CD4-positive, alpha-beta memory T cell (primary cell): ENCODE measurements at regions of chr11 and their contacts with region 1.

Region 1: GRCh38 chr11:65117216-65118096 is at the start of gene ZNHIT2:
- DNase-seq: peak; percentile 100
- H3K4me3 ChIP-seq: peak within 1 kb of the TSS; percentile 69 to 82
- H3K4me3 Mint-ChIP-seq: peak within 1 kb of the TSS; percentile 88 to 94 (median 92)
- H3K27ac ChIP-seq: peak within 1 kb of the TSS; percentile 91
- H3K27ac Mint-ChIP-seq: peak within 1 kb of the TSS; percentile 95 to 99 (median 97)
- H3K4me1 ChIP-seq: peaks cover 40% of the 10 kb centered on the region
- H3K4me1 Mint-ChIP-seq: peaks cover 17 to 69% (median 42%) of the 10 kb centered on the region in 4 donors
- H3K27me3 ChIP-seq: no peaks in the 10 kb centered on the region
- H3K27me3 Mint-ChIP-seq: no peaks in the 10 kb centered on the region
- total RNA-seq, gene ZNHIT2: 15.9 to 16.5 TPM

Region 2: GRCh38 chr11:64778508-64779346 is 338.7 kb before region 1 on chr11 and contains the start of gene SF1:
- CTCF ChIA-PET with region 1: interaction called, 3 read pairs
- POLR2A ChIA-PET with region 1: interaction called, 21 read pairs
- intact Hi-C with region 1: no loop called
- DNase-seq: peak; percentile 99 to 100 (median 100)
- H3K4me3 ChIP-seq: peak within 1 kb of the TSS; percentile 94 to 98
- H3K4me3 Mint-ChIP-seq: peak within 1 kb of the TSS; percentile 89 to 96 (median 94)
- H3K27ac ChIP-seq: peak within 1 kb of the TSS; percentile 98
- H3K27ac Mint-ChIP-seq: peak within 1 kb of the TSS; percentile 98 to 100 (median 98)
- H3K4me1 ChIP-seq: peaks cover 57% of the 10 kb centered on the region
- H3K4me1 Mint-ChIP-seq: peaks cover 41 to 70% (median 55%) of the 10 kb centered on the region in 4 donors
- H3K27me3 ChIP-seq: no peaks in the 10 kb centered on the region
- H3K27me3 Mint-ChIP-seq: peaks cover 0 to 4% of the 10 kb centered on the region in 2 donors
- total RNA-seq, gene SF1: 805 to 832 TPM

Region 3: DNA sequence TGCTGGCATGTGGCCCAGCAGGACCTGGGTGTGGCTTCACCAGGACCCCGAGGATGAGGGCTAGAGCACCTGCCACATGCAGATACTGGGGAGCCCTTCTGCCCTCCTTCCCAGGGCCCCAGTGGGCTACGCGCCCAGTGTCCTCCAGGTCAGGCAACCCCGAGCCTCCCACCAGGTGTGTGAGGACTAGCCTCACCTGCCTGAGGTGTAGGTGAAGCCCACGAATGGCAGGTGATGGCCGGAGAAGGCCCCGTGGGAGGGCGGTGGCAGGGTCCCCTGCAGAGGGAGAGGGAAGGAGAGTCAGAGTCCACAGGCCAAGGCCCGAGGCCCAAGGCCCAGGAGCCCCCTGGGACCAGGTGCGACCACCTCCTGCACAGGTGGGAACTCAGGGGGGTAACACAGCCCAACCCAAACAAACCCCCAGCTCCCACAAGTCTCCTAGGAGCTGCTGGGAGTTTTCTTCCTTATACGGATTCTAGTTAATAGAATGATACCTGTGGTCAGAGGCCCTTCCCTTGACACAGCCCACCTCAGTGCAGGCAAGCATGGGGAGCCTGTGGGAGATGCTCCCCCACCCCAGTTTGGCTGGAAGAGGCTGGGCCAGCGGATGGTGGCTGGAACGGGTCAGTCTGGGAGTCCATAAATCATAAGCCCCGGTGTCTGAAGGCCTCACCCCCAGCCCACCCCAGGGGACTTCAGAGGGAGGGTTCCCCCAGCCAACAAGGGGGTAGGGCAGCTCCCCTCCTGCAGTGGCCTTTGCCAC is 279.4 kb before region 1 on chr11:
- CTCF ChIA-PET with region 1: no interaction called
- POLR2A ChIA-PET with region 1: no interaction called
- intact Hi-C with region 1: no loop called
- DNase-seq: peak in 1 of 5 donors; percentile 25
- H3K4me3 ChIP-seq: no peak overlapping the region
- H3K4me3 Mint-ChIP-seq: no peak overlapping the region
- H3K27ac ChIP-seq: no peak overlapping the region
- H3K27ac Mint-ChIP-seq: no peak overlapping the region
- H3K4me1 ChIP-seq: no peaks in the 10 kb centered on the region
- H3K4me1 Mint-ChIP-seq: peaks cover 0 to 6% (median 3%) of the 10 kb centered on the region in 4 donors
- H3K27me3 ChIP-seq: no peaks in the 10 kb centered on the region
- H3K27me3 Mint-ChIP-seq: no peaks in the 10 kb centered on the region

Region 4: GRCh38 chr11:64924102-64924851 is 193.2 kb before region 1 on chr11 and contains the start of gene PPP2R5B:
- CTCF ChIA-PET with region 1: interaction called, 3 read pairs
- POLR2A ChIA-PET with region 1: interaction called, 13 read pairs
- intact Hi-C with region 1: loop called (anchors 2 kb)
- DNase-seq: peak; percentile 87 to 95 (median 90)
- H3K4me3 ChIP-seq: peak within 1 kb of the TSS; percentile 61 to 85
- H3K4me3 Mint-ChIP-seq: peak within 1 kb of the TSS; percentile 93 to 99 (median 96)
- H3K27ac ChIP-seq: peak within 1 kb of the TSS; percentile 78
- H3K27ac Mint-ChIP-seq: peak within 1 kb of the TSS; percentile 98 to 100 (median 99)
- H3K4me1 ChIP-seq: peaks cover 20% of the 10 kb centered on the region
- H3K4me1 Mint-ChIP-seq: peaks cover 9 to 15% (median 11%) of the 10 kb centered on the region in 4 donors
- H3K27me3 ChIP-seq: no peaks in the 10 kb centered on the region
- H3K27me3 Mint-ChIP-seq: no peaks in the 10 kb centered on the region
- total RNA-seq, gene PPP2R5B: 14.0 to 15.8 TPM

Region 5: GRCh38 chr11:65040847-65041621 is 76.4 kb before region 1 on chr11 and contains the start of gene SAC3D1:
- CTCF ChIA-PET with region 1: no interaction called
- POLR2A ChIA-PET with region 1: interaction called, 16 read pairs
- intact Hi-C with region 1: no loop called
- DNase-seq: peak; percentile 87 to 91 (median 90)
- H3K4me3 ChIP-seq: peak within 1 kb of the TSS; percentile 61 to 64
- H3K4me3 Mint-ChIP-seq: peak within 1 kb of the TSS; percentile 92 to 97 (median 94)
- H3K27ac ChIP-seq: peak within 1 kb of the TSS; percentile 61
- H3K27ac Mint-ChIP-seq: peak within 1 kb of the TSS; percentile 87 to 97 (median 95)
- H3K4me1 ChIP-seq: peaks cover 25% of the 10 kb centered on the region
- H3K4me1 Mint-ChIP-seq: peaks cover 5 to 24% (median 15%) of the 10 kb centered on the region in 4 donors
- H3K27me3 ChIP-seq: no peaks in the 10 kb centered on the region
- H3K27me3 Mint-ChIP-seq: no peaks in the 10 kb centered on the region
- total RNA-seq, gene SAC3D1: 9.4 to 10.5 TPM

Region 6: GRCh38 chr11:65128148-65129145 is 11.0 kb after region 1 on chr11:
- CTCF ChIA-PET with region 1: interaction called, 5 read pairs
- POLR2A ChIA-PET with region 1: interaction called, 251 read pairs
- intact Hi-C with region 1: no loop called
- DNase-seq: no peak
- H3K4me3 ChIP-seq: no peak overlapping the region
- H3K4me3 Mint-ChIP-seq: no peak overlapping the region
- H3K27ac ChIP-seq: no peak overlapping the region
- H3K27ac Mint-ChIP-seq: peak overlapping the region in 2 of 7 donors; percentile 36 to 58
- H3K4me1 ChIP-seq: peaks cover 20% of the 10 kb centered on the region
- H3K4me1 Mint-ChIP-seq: peaks cover 9 to 26% (median 13%) of the 10 kb centered on the region in 4 donors
- H3K27me3 ChIP-seq: no peaks in the 10 kb centered on the region
- H3K27me3 Mint-ChIP-seq: no peaks in the 10 kb centered on the region

Region 7: DNA sequence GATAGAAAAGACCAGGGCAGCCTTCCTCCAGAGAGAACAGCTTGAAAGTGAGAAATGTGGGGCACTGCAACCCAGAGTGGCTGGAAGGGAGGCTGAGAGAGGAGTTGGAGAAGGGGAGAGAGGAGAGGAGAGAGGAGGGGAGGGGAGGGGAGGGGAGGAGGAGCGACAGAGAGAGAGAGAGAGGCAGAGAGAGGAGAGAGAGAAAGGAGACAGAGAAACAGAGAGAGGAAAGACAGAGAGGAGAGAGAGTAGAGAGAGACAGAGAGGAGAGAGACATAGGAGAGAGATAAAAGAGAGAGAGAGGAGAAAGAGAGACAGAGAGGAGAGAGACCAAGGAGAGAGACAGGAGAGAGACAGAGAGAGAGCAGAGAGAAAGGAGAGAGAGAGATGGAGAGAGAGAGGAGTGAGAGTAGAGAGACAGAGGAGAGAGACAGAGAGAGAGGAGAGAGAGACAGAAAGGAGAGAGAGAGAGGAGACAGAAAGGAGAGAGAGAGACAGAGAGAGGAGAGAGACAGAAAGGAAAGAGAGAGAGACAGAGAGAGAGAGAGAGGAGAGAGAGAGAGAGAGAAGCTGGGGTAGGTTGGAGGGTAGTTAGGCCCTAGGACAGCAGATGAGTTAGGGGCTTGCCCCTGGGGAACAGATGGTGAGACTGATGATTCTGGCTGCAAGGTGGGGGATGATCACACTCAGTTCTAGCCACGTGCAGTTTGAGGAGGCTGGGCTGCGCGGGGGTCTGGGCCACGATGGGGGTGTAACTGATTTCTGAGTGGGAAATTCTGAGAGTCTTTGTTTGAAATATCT is 398.9 kb after region 1 on chr11:
- CTCF ChIA-PET with region 1: no interaction called
- POLR2A ChIA-PET with region 1: no interaction called
- intact Hi-C with region 1: loop called (anchors 10 kb)
- DNase-seq: peak in 1 of 5 donors; percentile 15
- H3K4me3 ChIP-seq: no peak overlapping the region
- H3K4me3 Mint-ChIP-seq: peak overlapping the region in 2 of 8 donors; percentile 57 to 70
- H3K27ac ChIP-seq: no peak overlapping the region
- H3K27ac Mint-ChIP-seq: peak overlapping the region; percentile 21 to 92 (median 72)
- H3K4me1 ChIP-seq: no peaks in the 10 kb centered on the region
- H3K4me1 Mint-ChIP-seq: peaks cover 4 to 11% (median 10%) of the 10 kb centered on the region in 4 donors
- H3K27me3 ChIP-seq: no peaks in the 10 kb centered on the region
- H3K27me3 Mint-ChIP-seq: peaks cover 0 to 3% of the 10 kb centered on the region in 2 donors